Activated CD8-positive, alpha-beta T cell treated with anti-CD3 and anti-CD28 coated beads, Interleukin-2, amount 10 ng/mL, durations not matched to agents 7 days and 5 days (primary cell): ENCODE measurements at regions of chr12 and their contacts with region 1.

Region 1: DNA sequence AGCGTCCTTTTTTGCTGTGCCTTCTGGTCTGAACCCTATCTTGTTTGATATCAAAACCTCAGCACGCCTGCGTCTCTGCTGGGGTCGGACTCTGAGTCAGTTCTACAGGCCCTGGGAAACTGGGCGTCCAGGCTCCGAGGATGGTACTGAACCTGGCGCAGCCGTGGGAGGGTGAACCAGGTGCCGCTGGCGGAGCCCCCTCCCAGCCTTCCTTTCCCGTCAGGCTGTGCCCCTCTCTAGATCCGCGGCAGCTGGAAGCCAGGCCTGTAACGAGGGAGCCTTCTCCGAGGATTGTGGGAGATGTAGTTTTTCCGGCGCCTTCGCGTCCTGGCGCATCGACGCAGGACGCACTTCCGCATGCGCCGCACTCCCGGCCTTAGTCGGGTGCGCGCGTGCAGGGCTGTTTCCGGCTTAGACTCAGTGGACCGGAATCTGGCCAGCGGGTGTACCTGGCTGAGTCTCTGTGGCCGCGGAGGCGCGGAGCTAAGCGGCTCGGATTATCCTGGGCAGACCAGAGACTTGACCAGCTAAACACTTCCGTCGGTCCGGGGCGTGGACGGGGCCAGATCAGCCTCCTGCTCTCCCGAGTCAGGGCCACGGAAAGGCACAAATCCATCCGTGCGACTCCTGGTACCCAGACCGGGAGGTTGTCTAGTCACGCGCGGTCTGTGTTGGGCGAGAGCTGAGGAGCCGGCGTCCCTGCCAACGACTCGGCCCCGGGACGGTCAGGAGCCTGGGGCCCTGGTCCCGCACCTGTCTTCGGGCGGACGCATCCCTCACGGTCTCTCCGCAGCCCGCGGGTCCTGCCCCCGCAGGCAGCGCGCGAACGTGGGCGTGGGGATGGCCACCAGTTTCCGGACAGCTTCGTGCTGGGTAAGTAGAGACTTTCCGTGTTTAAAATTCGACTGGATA is at the start of gene ZNF26:
- DNase-seq: peak; percentile 93
- ATAC-seq: peak; percentile 96
- H3K4me3 Mint-ChIP-seq: peak within 1 kb of the TSS; percentile 88
- H3K27ac Mint-ChIP-seq: peak within 1 kb of the TSS; percentile 96
- H3K4me1 Mint-ChIP-seq: peaks cover 27% of the 10 kb centered on the region
- H3K27me3 Mint-ChIP-seq: no peaks in the 10 kb centered on the region
- total RNA-seq, gene ZNF26: 19.5 to 20.8 TPM

Region 2: DNA sequence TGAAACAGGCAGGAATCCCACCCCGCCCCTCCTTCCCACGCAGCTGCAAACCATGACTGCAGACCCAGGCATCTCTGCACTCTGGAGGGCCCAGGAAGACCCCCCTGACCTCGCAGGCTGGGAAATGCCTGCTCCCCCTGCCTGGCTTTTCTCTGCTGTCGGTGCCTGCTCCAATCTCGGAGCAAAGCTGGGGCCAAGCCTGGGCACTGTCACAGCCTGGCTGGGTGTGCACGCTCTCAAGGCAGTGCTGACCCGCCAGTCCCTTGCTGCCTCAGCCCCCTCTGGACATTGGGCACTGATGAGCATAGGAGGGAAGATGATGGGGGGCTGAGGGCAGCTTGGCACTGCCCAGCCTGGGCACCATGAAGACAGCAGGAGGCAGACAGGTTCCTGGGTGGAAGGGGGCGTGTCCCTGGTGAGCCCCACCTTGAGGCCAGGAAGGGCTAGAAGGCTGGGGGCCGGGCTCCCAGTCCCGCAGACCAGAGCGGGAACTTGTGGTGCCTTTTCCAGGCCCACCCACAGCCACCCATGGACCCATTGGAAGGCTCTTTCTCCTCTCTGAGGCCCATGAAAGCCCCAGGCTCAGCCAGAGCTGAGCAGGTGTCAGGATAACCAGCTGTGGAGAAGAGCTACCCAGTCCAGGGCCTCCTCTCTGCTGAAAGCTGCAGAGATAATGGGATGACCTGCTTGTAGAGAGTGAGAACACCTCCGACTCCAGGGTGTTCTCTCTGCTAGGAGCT is 19.4 kb before region 1 on chr12:
- CTCF ChIA-PET with region 1: no interaction called
- POLR2A ChIA-PET with region 1: no interaction called
- DNase-seq: no peak
- ATAC-seq: no peak
- H3K4me3 Mint-ChIP-seq: no peak overlapping the region
- H3K27ac Mint-ChIP-seq: no peak overlapping the region
- H3K4me1 Mint-ChIP-seq: no peaks in the 10 kb centered on the region
- H3K27me3 Mint-ChIP-seq: no peaks in the 10 kb centered on the region

Region 3: DNA sequence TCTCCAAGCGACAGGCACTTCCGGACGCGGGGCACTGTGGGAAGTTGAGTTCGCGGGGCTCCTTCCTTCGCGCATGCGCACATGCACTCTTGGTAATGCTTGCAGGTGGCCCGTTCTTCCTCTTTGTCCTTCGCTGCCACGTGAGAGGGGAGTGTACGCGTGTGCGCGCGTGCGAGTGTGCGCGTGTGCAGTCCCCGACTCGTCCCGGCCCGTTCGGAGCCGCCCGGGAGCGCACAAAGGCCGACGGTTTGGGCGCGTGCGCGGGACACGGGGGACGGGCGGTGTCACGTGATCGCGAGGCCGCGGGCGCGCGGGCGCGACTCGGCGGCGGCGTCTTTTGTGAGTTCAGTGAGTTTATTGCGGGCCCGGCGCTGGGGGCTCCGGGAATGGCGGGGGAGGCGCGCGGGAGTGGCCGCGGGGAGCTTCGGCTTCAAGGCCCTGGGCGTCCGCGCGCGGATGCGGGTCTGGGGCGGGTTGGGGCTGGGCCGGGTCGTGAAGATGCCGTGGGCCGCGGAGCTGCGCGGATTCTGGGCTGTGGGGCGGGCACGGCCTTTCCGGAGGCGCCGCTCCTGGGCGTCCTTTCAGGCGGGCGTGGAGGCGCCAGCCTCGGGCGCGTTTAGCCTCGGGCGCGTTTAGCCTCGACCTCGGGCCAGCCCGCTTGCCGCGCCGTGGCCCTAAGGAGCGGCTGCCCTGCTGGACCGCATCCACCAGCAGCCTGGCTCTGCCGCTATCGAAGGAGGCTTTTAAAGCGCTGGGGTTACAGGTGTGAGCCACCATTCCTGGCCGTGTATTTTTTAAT is 51.1 kb after region 1 on chr12 and contains the start of gene ZNF84:
- CTCF ChIA-PET with region 1: interaction called, 4 read pairs
- POLR2A ChIA-PET with region 1: interaction called, 19 read pairs
- DNase-seq: peak; percentile 98
- ATAC-seq: peak; percentile 97
- H3K4me3 Mint-ChIP-seq: peak within 1 kb of the TSS; percentile 93
- H3K27ac Mint-ChIP-seq: peak within 1 kb of the TSS; percentile 99
- H3K4me1 Mint-ChIP-seq: peaks cover 18% of the 10 kb centered on the region
- H3K27me3 Mint-ChIP-seq: no peaks in the 10 kb centered on the region
- total RNA-seq, gene ZNF84: 27.2 to 28.7 TPM

Region 4: DNA sequence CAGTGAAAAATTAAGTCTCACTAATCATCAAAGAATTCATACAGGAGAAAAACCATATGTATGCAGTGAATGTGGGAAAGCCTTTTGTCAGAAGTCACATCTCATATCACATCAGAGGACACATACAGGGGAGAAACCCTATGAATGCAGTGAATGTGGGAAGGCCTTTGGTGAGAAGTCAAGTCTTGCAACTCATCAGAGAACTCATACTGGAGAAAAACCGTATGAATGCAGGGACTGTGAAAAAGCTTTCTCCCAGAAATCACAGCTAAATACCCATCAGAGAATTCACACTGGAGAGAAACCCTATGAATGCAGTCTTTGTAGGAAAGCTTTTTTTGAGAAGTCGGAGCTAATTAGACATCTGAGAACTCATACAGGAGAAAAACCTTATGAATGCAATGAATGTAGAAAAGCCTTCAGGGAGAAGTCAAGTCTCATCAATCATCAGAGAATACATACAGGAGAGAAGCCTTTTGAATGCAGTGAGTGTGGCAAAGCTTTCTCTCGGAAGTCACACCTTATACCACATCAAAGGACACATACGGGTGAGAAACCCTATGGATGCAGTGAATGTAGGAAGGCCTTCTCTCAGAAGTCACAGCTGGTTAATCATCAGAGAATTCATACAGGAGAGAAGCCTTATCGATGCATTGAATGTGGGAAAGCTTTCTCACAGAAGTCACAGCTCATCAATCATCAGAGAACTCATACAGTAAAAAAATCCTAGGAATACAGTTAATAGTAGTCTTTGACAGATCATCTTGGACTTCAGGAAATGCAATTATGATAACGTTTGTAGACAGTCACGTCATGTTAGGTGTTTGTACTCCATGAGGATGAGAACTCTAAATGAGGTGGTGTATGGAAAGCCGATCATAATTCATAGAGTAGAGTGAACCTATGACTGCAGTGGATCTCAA is 72.2 kb after region 1 on chr12:
- CTCF ChIA-PET with region 1: no interaction called
- POLR2A ChIA-PET with region 1: no interaction called
- DNase-seq: no peak
- ATAC-seq: no peak
- H3K4me3 Mint-ChIP-seq: no peak overlapping the region
- H3K27ac Mint-ChIP-seq: no peak overlapping the region
- H3K4me1 Mint-ChIP-seq: no peaks in the 10 kb centered on the region
- H3K27me3 Mint-ChIP-seq: no peaks in the 10 kb centered on the region

Region 5: DNA sequence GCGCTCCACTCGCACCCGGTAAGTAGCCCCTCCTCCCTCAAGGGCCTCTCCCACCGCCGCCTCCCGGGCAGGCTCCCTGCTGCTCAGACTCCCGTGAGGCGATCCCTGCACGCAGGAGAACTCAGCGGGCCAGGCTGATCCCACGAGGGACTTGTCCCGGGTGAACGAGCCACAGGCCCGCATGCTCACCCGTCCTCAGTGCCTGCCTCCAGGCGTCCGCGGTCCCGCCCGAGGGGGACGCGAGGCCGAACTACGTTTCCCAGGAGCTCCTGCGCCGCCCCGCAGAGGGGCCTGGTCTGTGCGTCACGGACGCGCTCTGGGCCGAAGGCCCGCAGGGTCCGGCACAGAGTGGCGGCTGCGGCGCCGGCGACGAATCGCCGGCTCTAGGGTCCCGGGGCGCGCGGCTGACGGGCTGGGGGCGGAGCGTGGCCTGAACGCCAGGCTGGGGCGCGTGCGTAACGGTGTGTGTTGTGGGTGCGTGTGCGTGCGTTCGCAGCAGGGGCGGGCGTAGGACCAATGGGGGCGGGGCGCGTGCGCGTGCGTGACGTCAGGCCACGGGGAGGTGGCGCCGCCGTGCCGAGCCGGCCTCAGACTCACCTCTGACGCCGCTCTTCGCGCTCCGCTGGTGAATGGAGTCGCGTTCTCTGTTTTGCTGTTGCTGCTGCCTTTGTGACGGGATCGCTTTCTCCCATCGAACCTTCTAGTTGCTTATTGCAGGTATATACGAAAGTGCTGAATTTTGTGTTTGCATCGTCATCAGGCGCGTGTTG is 144.0 kb after region 1 on chr12 and contains the starts of genes ZNF10 and ZNF891:
- CTCF ChIA-PET with region 1: no interaction called
- POLR2A ChIA-PET with region 1: interaction called, 12 read pairs
- DNase-seq: peak; percentile 97
- ATAC-seq: peak; percentile 91
- H3K4me3 Mint-ChIP-seq: peak within 1 kb of the TSS; percentile 91
- H3K27ac Mint-ChIP-seq: peak within 1 kb of the TSS; percentile 100
- H3K4me1 Mint-ChIP-seq: peaks cover 21% of the 10 kb centered on the region
- H3K27me3 Mint-ChIP-seq: no peaks in the 10 kb centered on the region
- total RNA-seq, gene ZNF10: 8.1 to 8.5 TPM
- total RNA-seq, gene ZNF891: 1.9 to 2.3 TPM